PC-3 (cell line): ENCODE measurements at regions of chr6 and their contacts with region 1.

Region 1: DNA sequence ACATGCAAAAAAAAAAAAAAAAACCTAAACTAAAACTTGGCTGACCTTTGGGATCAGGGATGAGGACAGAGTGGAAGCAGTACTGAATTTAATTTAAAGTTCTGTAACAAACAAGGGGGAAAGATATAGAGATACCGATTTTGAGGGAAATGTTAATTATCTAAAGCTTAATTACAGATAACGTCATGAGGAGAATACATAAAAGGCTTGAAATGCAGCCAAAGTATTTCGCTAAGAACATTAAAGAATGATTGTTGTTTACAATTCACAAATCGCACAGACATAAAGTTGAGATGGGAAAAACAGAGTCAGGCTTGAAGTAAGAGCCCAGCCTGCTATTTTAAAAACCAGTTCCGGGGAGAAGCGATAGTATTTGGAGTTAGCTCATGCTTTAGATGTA is 208.0 kb upstream of the SASH1 start:
- DNase-seq: no peak
- ATAC-seq: no peak
- H3K4me3 ChIP-seq: no peak overlapping the region
- H3K27ac ChIP-seq: no peak overlapping the region
- H3K4me1 ChIP-seq: peaks cover 15% of the 10 kb centered on the region
- H3K27me3 ChIP-seq: no peaks in the 10 kb centered on the region
- CTCF ChIP-seq: no peak

Region 2: DNA sequence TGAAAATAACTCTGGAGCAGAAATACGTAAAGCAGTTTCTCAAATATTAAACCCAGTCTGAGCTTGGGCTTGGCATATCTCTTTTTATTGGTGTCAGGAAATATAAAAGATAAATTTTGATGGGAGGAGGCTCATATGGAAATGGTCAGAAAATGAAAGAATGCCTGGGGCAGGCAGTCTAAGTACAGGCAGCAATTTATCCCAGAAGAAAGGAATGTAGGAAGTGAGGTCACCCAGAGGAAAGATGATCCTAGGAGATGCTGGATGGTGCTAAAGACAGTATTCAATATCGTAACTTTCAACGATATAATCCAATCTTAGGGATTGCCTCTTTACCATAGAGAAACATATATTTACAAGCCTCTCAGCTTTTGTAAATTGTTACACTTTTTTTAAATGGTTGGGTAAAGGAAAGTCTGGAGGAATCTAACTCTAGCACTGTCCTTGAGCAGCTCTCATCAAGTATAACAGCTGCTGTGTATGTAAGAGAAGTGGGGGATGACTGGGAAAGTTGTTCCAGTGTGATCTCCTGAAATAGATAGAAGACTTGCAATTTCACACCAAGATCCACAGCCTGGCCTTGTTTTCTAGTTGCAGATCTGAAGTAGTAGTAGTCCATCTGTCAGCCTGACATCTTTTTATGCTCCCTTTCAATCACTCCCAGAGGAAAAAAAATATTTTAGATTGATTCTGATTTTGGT is 48.8 kb before region 1 on chr6:
- CTCF ChIA-PET with region 1: no interaction called
- POLR2A ChIA-PET with region 1: no interaction called
- intact Hi-C with region 1: loop called (anchors 5 kb)
- DNase-seq: no peak
- ATAC-seq: no peak
- H3K4me3 ChIP-seq: no peak overlapping the region
- H3K27ac ChIP-seq: no peak overlapping the region
- H3K4me1 ChIP-seq: peaks cover 6% of the 10 kb centered on the region; the same call in 1 of the 2 replicates
- H3K27me3 ChIP-seq: no peaks in the 10 kb centered on the region
- CTCF ChIP-seq: no peak